Ascending aorta (tissue), 2 donors: ENCODE measurements at regions of chr2 and their contacts with region 1.

Region 1: GRCh38 chr2:209423562-209424198 is at the start of gene MAP2:
- DNase-seq: peak; percentile 32 to 92
- H3K4me3 ChIP-seq: peak within 1 kb of the TSS; percentile 61 to 74
- H3K27ac ChIP-seq: peak within 1 kb of the TSS; percentile 61 to 70
- H3K4me1 ChIP-seq: peaks cover 0 to 8% of the 10 kb centered on the region in 2 donors
- H3K27me3 ChIP-seq: no peaks in the 10 kb centered on the region
- CTCF ChIP-seq: peak; percentile 76 to 99 (median 78)
- total RNA-seq, gene MAP2: 57.6 TPM

Region 2: GRCh38 chr2:209367091-209367747 is 56.5 kb before region 1 on chr2:
- intact Hi-C with region 1: loop called (anchors 2 kb)
- DNase-seq: no peak
- H3K4me3 ChIP-seq: no peak overlapping the region
- H3K27ac ChIP-seq: no peak overlapping the region
- H3K4me1 ChIP-seq: peaks cover 0 to 7% of the 10 kb centered on the region in 2 donors
- H3K27me3 ChIP-seq: no peaks in the 10 kb centered on the region
- CTCF ChIP-seq: no peak

Region 3: DNA sequence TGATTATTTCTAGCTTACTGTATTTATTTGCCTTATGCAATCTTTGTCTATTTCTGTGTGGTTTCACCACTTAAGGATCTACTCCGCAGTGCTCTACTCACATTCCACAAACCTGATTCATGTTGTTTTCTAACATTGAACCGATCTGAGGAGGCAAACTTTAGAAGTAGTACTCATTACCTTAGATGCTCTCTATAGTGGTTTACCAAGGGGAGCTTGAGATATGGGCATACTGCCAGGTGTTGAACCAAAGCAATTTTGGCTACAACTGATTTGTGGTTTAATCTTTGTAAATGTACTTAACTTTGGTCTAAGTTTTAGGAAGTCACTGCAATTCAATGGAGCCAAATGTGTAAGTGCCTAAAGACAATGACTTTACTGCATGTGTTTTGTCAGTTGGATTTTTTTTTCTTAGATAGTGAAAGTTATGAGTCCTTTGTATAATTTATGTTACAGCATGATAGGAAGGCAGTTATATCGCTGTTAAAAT is 50.3 kb after region 1 on chr2:
- intact Hi-C with region 1: loop called (anchors 5 kb)
- DNase-seq: no peak
- H3K4me3 ChIP-seq: no peak overlapping the region
- H3K27ac ChIP-seq: no peak overlapping the region
- H3K4me1 ChIP-seq: peaks cover 4 to 20% of the 10 kb centered on the region in 2 donors
- H3K27me3 ChIP-seq: no peaks in the 10 kb centered on the region
- CTCF ChIP-seq: no peak

Region 4: GRCh38 chr2:209505410-209505809 is 81.7 kb after region 1 on chr2:
- intact Hi-C with region 1: no loop called
- DNase-seq: no peak
- H3K4me3 ChIP-seq: peak overlapping the region in 1 of 2 donors; percentile 5
- H3K27ac ChIP-seq: peak overlapping the region in 1 of 2 donors; percentile 5
- H3K4me1 ChIP-seq: peaks cover 0 to 5% of the 10 kb centered on the region in 2 donors
- H3K27me3 ChIP-seq: no peaks in the 10 kb centered on the region
- CTCF ChIP-seq: no peak

Region 5: DNA sequence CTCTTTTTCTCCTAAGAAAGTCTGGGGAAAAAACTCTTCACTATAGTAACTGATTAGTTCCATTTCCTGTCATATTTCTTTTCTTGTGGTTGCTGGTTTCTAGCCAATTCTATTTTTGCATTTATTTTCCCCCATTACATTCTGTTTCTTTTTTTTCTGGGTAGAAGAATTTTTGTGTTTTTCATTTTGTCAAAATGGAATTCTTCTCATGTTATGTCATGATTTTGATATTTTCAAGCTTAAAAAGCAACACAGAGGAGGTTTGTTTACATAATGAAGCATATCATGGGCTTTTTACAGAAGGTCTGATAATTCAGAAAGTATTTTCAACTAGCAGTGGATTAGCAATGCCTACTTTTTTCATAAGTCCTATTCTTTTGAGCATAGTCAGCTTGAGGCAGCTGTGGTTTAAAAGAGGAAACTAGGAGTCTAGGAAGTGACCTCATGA is 102.2 kb after region 1 on chr2:
- intact Hi-C with region 1: loop called (anchors 1 kb)
- DNase-seq: no peak
- H3K4me3 ChIP-seq: peak overlapping the region; percentile 31 to 47
- H3K27ac ChIP-seq: peak overlapping the region; percentile 82 to 84
- H3K4me1 ChIP-seq: peaks cover 0 to 32% of the 10 kb centered on the region in 2 donors
- H3K27me3 ChIP-seq: no peaks in the 10 kb centered on the region
- CTCF ChIP-seq: no peak

Region 6: GRCh38 chr2:209577376-209578357 is 154.0 kb after region 1 on chr2:
- intact Hi-C with region 1: loop called (anchors 5 kb)
- DNase-seq: no peak
- H3K4me3 ChIP-seq: no peak overlapping the region
- H3K27ac ChIP-seq: no peak overlapping the region
- H3K4me1 ChIP-seq: no peaks in the 10 kb centered on the region
- H3K27me3 ChIP-seq: no peaks in the 10 kb centered on the region
- CTCF ChIP-seq: peak in 2 of 3 experiments; percentile 21 to 48

Region 7: GRCh38 chr2:210233487-210233886 is 809.8 kb after region 1 on chr2:
- intact Hi-C with region 1: loop called (anchors 5 kb)
- DNase-seq: peak; percentile 21 to 91
- H3K4me3 ChIP-seq: no peak overlapping the region
- H3K27ac ChIP-seq: peak overlapping the region; percentile 56 to 74
- H3K4me1 ChIP-seq: peaks cover 0 to 16% of the 10 kb centered on the region in 2 donors
- H3K27me3 ChIP-seq: no peaks in the 10 kb centered on the region
- CTCF ChIP-seq: peak; percentile 36 to 42 (median 41)